ENCODE measurements at regions of chrX and their contacts with region 1.

Region 1: GRCh38 chrX:57453901-57454300 is 137.9 kb upstream of the ZXDB start:
- DNase-seq: peak; percentile 28
- ATAC-seq: peak; percentile 78
- H3K4me3 ChIP-seq: no peak overlapping the region
- H3K27ac ChIP-seq: no peak overlapping the region
- H3K4me1 ChIP-seq: no peaks in the 10 kb centered on the region
- H3K27me3 ChIP-seq: no peaks in the 10 kb centered on the region
- CTCF ChIP-seq: peak; percentile 58
- EP300 ChIP-seq: no peak
- POLR2A ChIP-seq: no peak
- RAD21 ChIP-seq: no peak

Region 2: GRCh38 chrX:56802921-56803849 is 650.7 kb before region 1 on chrX:
- CTCF ChIA-PET with region 1: no interaction called
- POLR2A ChIA-PET with region 1: no interaction called
- in situ Hi-C with region 1: no loop called
- intact Hi-C with region 1: loop called (anchors 5 kb)
- DNase-seq: peak; percentile 39
- ATAC-seq: peak; percentile 95
- H3K4me3 ChIP-seq: peak overlapping the region; percentile 53 to 70 (median 55); a peak in 5 of 6 replicates
- H3K27ac ChIP-seq: no peak overlapping the region
- H3K4me1 ChIP-seq: no peaks in the 10 kb centered on the region
- H3K27me3 ChIP-seq: no peaks in the 10 kb centered on the region
- CTCF ChIP-seq: peak; percentile 79
- EP300 ChIP-seq: no peak
- POLR2A ChIP-seq: no peak
- RAD21 ChIP-seq: peak; percentile 46; the same call in 1 of the 2 replicates

Region 3: GRCh38 chrX:57156397-57157049 is 297.4 kb before region 1 on chrX:
- CTCF ChIA-PET with region 1: interaction called, 6 read pairs
- POLR2A ChIA-PET with region 1: no interaction called
- in situ Hi-C with region 1: no loop called
- intact Hi-C with region 1: loop called (anchors 1 kb)
- DNase-seq: peak; percentile 50
- ATAC-seq: peak; percentile 100
- H3K4me3 ChIP-seq: no peak overlapping the region
- H3K27ac ChIP-seq: no peak overlapping the region
- H3K4me1 ChIP-seq: peaks cover 13% of the 10 kb centered on the region; the same call in 1 of the 2 replicates
- H3K27me3 ChIP-seq: no peaks in the 10 kb centered on the region
- CTCF ChIP-seq: peak; percentile 77
- EP300 ChIP-seq: no peak
- POLR2A ChIP-seq: no peak
- RAD21 ChIP-seq: no peak; the same call in 1 of the 2 replicates

Region 4: GRCh38 chrX:57286507-57287251 is 167.2 kb before region 1 on chrX and contains the start of gene FAAH2:
- CTCF ChIA-PET with region 1: no interaction called
- POLR2A ChIA-PET with region 1: no interaction called
- in situ Hi-C with region 1: loop called (anchors 10 kb)
- intact Hi-C with region 1: loop called (anchors 2 kb)
- DNase-seq: peak; percentile 57
- ATAC-seq: peak; percentile 95
- H3K4me3 ChIP-seq: peak within 1 kb of the TSS; percentile 58 to 69 (median 58)
- H3K27ac ChIP-seq: peak within 1 kb of the TSS; percentile 60
- H3K4me1 ChIP-seq: peaks cover 26% of the 10 kb centered on the region; the same call in 1 of the 2 replicates
- H3K27me3 ChIP-seq: no peaks in the 10 kb centered on the region; a peak in 1 of 5 replicates
- CTCF ChIP-seq: peak; percentile 11; the same call in 1 of the 2 replicates
- EP300 ChIP-seq: peak in 1 of 2 experiments; percentile 26; a peak in 1 of 4 replicates
- POLR2A ChIP-seq: peak in 1 of 2 experiments; percentile 24; a peak in 1 of 4 replicates
- RAD21 ChIP-seq: no peak
- total RNA-seq, gene FAAH2: 3.3 TPM in 2 replicates